Vagina (tissue), 2 donors: ENCODE measurements at regions of chr2 and their contacts with region 1.

Region 1: GRCh38 chr2:30711646-30712085 is 95.6 kb downstream of the CAPN13 start:
- DNase-seq: peak; percentile 82 to 90
- H3K4me3 ChIP-seq: no peak overlapping the region
- H3K27ac ChIP-seq: no peak overlapping the region
- H3K4me1 ChIP-seq: peaks cover 16% of the 10 kb centered on the region
- H3K27me3 ChIP-seq: no peaks in the 10 kb centered on the region
- CTCF ChIP-seq: peak; percentile 86 to 95 (median 95)
- POLR2A ChIP-seq: no peak

Region 2: GRCh38 chr2:30172627-30173026 is 539.0 kb before region 1 on chr2:
- intact Hi-C with region 1: loop called (anchors 5 kb)
- DNase-seq: no peak
- H3K4me3 ChIP-seq: no peak overlapping the region
- H3K27ac ChIP-seq: no peak overlapping the region
- H3K4me1 ChIP-seq: no peaks in the 10 kb centered on the region
- H3K27me3 ChIP-seq: no peaks in the 10 kb centered on the region
- CTCF ChIP-seq: no peak
- POLR2A ChIP-seq: no peak

Region 3: DNA sequence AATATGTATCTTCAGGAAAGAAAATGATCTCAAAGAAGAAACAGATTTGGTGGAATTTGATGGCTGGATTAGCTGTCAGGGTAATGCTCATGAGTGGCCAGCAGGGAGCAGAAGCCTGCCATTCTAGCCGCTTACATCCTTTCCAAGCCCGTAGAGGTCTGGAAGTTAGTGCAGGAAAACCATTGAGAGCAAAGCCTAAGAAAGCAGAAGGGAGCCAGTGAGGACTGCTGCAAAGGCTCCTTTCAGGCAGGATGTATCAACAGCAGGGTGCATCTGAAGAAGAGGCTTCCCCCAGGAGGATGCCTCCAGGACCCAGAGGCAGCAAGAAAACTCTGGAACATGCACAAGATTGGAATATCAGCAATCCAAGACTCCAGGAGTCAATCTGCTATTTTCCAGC is 503.2 kb before region 1 on chr2:
- intact Hi-C with region 1: loop called (anchors 5 kb)
- DNase-seq: no peak
- H3K4me3 ChIP-seq: no peak overlapping the region
- H3K27ac ChIP-seq: no peak overlapping the region
- H3K4me1 ChIP-seq: no peaks in the 10 kb centered on the region
- H3K27me3 ChIP-seq: no peaks in the 10 kb centered on the region
- CTCF ChIP-seq: peak; percentile 69 to 94 (median 87)
- POLR2A ChIP-seq: no peak

Region 4: DNA sequence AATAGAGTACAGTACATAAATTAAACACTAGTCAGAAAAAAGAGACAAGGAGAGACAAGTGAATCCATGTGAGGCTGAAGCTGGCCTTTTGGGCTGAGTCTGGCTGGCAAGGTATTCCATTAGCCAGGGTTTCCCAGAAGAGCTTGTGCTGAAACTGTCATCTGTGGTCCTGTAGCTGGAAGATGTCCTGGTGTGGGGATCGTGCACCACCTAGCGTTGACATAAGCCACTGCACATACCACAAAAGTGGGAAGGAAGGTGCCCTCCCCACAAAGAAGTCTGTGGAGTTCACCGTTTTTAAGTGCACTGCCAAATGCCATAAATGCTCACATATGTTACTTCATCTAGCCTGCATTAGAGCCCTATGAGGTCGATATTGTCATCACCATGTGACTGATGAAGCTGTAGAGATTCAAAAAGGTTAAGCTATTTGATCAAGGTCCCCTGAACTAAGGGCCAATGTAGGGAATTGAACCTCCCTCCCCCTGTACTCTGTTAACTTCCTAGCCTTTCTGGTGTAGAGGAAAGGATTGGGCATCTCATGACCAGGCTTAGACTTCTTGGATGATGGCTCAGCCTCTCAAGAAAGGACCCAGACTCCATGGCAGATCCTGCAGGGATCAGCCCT is 458.5 kb after region 1 on chr2:
- intact Hi-C with region 1: loop called (anchors 10 kb)
- DNase-seq: peak in 1 of 2 donors; percentile 82
- H3K4me3 ChIP-seq: no peak overlapping the region
- H3K27ac ChIP-seq: no peak overlapping the region
- H3K4me1 ChIP-seq: no peaks in the 10 kb centered on the region
- H3K27me3 ChIP-seq: no peaks in the 10 kb centered on the region
- CTCF ChIP-seq: peak; percentile 61 to 74 (median 69)
- POLR2A ChIP-seq: no peak

Region 5: GRCh38 chr2:31319406-31320175 is 607.9 kb after region 1 on chr2:
- intact Hi-C with region 1: loop called (anchors 10 kb)
- DNase-seq: peak; percentile 70 to 86
- H3K4me3 ChIP-seq: no peak overlapping the region
- H3K27ac ChIP-seq: peak overlapping the region; percentile 41
- H3K4me1 ChIP-seq: peaks cover 21% of the 10 kb centered on the region
- H3K27me3 ChIP-seq: no peaks in the 10 kb centered on the region
- CTCF ChIP-seq: no peak
- POLR2A ChIP-seq: no peak